ENCODE measurements at regions of chr2 and their contacts with region 1.

Region 1: DNA sequence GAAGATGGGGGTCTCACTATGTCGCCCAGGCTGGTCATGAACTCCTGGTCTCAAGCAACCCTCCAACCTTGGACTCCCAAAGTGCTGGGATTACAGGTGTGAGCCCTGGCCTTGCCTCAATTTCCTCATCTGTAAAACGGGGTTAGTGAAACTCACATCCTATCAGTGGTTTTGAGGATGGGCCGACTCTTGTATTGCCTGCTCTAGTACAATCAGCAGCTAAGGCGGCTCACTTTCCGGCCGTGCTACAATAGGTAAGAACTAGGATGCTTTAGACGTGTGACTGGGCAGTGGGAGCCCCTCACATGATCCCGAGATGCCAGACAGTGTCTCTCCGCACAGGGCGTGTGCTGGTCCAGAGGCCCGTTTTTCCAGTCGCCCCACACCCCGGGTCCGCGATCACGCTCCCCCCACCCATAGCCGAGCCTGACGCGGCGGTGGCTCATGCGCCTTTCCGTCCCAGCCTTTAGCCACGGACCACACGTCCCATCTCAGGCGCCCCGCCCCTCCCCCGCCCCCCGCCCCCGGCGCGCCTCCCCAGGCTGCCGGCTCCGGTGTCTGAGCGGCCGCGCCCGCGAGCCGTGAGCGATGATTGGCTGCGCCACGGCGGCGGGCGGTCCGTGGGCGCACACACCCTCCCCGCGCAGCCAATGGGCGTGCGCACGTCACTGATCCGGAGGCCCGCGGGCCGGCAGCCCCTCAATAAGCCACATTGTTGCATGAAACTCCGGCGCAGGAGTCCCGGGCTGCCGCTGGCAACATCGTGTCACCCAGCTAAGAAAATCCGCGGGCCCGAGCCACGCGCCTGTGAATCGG is at the start of gene HK2:
- DNase-seq: peak; percentile 92 to 99 (median 99)
- ATAC-seq: peak; percentile 90
- H3K4me3 ChIP-seq: peak within 1 kb of the TSS; percentile 75
- H3K27ac ChIP-seq: peak within 1 kb of the TSS; percentile 83
- H3K4me1 ChIP-seq: peaks cover 29 to 44% of the 10 kb centered on the region in 2 experiments; a peak in 4 of 5 replicates
- H3K27me3 ChIP-seq: no peaks in the 10 kb centered on the region; a peak in 1 of 5 replicates
- CTCF ChIP-seq: no peak
- EP300 ChIP-seq: no peak
- POLR2A ChIP-seq: peak; percentile 70
- RAD21 ChIP-seq: no peak
- polyA plus RNA-seq, gene HK2: 4.7 to 6.4 TPM

Region 2: GRCh38 chr2:74843898-74844297 is 10.3 kb after region 1 on chr2:
- CTCF ChIA-PET with region 1: interaction called, 3 read pairs
- POLR2A ChIA-PET with region 1: interaction called, 11 read pairs
- in situ Hi-C with region 1: no loop called
- intact Hi-C with region 1: no loop called
- DNase-seq: no peak
- ATAC-seq: no peak; the same call in 2 of the 3 replicates
- H3K4me3 ChIP-seq: no peak overlapping the region
- H3K27ac ChIP-seq: no peak overlapping the region
- H3K4me1 ChIP-seq: peaks cover 14 to 35% of the 10 kb centered on the region in 2 experiments
- H3K27me3 ChIP-seq: no peaks in the 10 kb centered on the region
- CTCF ChIP-seq: no peak
- EP300 ChIP-seq: no peak
- POLR2A ChIP-seq: no peak
- RAD21 ChIP-seq: no peak

Region 3: DNA sequence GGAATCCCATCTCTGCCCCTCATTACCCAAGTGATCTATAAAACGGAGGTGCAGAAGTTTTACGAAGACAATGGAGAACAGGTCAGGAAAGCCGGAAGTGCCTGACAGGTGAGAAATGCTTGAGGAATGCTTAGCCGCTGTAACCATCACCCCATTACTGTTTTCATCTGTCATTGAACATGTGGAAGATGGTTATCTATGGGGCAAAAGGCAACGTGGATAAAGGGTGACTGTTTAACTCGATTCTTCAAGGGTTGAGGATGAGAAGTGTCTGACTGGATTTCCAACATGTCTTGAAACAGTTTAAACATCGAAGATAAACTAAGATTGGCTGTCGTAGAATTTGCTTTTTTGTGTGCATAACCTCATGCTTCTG is 17.6 kb after region 1 on chr2:
- CTCF ChIA-PET with region 1: no interaction called
- POLR2A ChIA-PET with region 1: interaction called, 10 read pairs
- in situ Hi-C with region 1: no loop called
- intact Hi-C with region 1: no loop called
- DNase-seq: no peak
- ATAC-seq: no peak
- H3K4me3 ChIP-seq: no peak overlapping the region
- H3K27ac ChIP-seq: no peak overlapping the region
- H3K4me1 ChIP-seq: peaks cover 10 to 14% of the 10 kb centered on the region in 2 experiments; a peak in 4 of 5 replicates
- H3K27me3 ChIP-seq: no peaks in the 10 kb centered on the region
- CTCF ChIP-seq: no peak
- EP300 ChIP-seq: no peak
- POLR2A ChIP-seq: no peak
- RAD21 ChIP-seq: no peak

Region 4: DNA sequence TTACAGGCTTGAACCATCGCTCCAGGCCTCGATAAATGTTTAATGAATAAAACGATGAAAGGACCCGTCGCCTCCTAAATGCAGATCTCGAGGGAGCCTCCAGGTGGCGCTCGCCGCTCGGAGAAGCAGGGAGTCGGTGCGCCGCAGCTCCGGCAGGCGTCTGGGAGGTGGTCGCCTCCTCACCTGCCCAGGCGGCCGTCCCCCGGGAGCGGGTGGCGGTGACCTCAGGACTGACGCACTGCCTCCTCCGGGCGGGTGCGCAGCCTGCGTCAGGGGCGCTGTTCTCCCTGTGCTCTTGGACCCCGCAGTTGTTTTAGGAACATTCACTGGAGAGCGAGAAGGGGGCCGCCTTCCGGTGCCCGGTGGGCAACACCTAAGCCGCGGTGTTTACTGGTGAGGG is 86.2 kb after region 1 on chr2:
- CTCF ChIA-PET with region 1: no interaction called
- POLR2A ChIA-PET with region 1: no interaction called
- in situ Hi-C with region 1: no loop called
- intact Hi-C with region 1: no loop called
- DNase-seq: peak; percentile 77 to 82 (median 80)
- ATAC-seq: peak; percentile 86
- H3K4me3 ChIP-seq: peak overlapping the region; percentile 18; the same call in 1 of the 2 replicates
- H3K27ac ChIP-seq: no peak overlapping the region
- H3K4me1 ChIP-seq: peaks cover 4 to 6% of the 10 kb centered on the region in 2 experiments; a peak in 2 of 5 replicates
- H3K27me3 ChIP-seq: peaks cover 3 to 40% of the 10 kb centered on the region in 2 experiments; a peak in 4 of 5 replicates
- CTCF ChIP-seq: peak; percentile 83 to 93 (median 89)
- EP300 ChIP-seq: no peak
- POLR2A ChIP-seq: no peak
- RAD21 ChIP-seq: peak; percentile 85 to 94

Region 5: GRCh38 chr2:75361486-75361885 is 527.9 kb after region 1 on chr2:
- CTCF ChIA-PET with region 1: no interaction called
- POLR2A ChIA-PET with region 1: no interaction called
- in situ Hi-C with region 1: no loop called
- intact Hi-C with region 1: no loop called
- DNase-seq: no peak
- ATAC-seq: no peak
- H3K4me3 ChIP-seq: no peak overlapping the region
- H3K27ac ChIP-seq: no peak overlapping the region
- H3K4me1 ChIP-seq: no peaks in the 10 kb centered on the region
- H3K27me3 ChIP-seq: no peaks in the 10 kb centered on the region
- CTCF ChIP-seq: no peak
- EP300 ChIP-seq: no peak
- POLR2A ChIP-seq: no peak
- RAD21 ChIP-seq: no peak